Activated T-helper 1 cell treated with anti-CD3 and anti-CD28 coated beads, Interleukin-12 subunit alpha, Interleukin-12 subunit beta, Interleukin-2, Interleukin-4 antibody, amounts not matched to agents 30 ng/mL and 10 ng/mL and 1 ng/mL, durations not matched to agents 14 hours and 24 hours and 36 hours (primary cell): ENCODE measurements at regions of chr4 and their contacts with region 1.

Region 1: DNA sequence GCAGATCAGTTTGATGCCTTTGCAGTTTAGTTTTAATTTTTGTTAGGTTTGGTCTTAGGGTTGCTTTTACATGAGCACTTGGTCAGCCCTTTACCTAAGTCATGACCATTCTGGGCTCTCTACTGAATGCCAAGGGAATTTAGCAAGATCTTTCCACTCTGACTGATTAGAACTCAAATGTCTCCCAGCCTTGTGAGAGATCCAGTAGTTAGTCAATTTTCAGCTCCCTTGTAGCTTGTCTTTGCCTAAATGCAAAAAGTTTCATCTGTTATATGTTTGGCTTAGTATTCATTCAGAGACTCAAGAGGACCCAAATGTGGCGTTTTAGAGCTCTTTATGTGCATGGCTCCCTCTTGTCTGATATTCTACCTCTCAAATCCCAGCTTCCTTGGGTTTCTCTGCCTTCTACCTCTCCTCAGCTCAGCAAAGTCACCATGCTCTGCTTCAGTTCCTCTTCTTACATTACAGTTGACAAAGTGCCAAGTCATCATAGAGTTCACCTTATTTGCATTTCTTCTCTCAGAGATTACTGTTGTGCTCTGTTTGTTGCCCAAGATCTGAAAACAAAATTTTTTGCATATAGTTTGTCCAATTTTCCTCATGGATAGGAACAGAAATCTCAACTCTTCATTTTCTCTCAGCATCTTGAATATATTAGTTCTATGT is 17.5 kb upstream of the JAKMIP1 start:
- DNase-seq: no peak
- H3K4me3 Mint-ChIP-seq: no peak overlapping the region
- H3K27ac Mint-ChIP-seq: no peak overlapping the region
- H3K4me1 Mint-ChIP-seq: no peaks in the 10 kb centered on the region
- H3K27me3 Mint-ChIP-seq: peaks cover 51% of the 10 kb centered on the region

Region 2: GRCh38 chr4:5635826-5636195 is 582.0 kb before region 1 on chr4:
- intact Hi-C with region 1: loop called (anchors 10 kb)
- DNase-seq: no peak
- H3K4me3 Mint-ChIP-seq: no peak overlapping the region
- H3K27ac Mint-ChIP-seq: no peak overlapping the region
- H3K4me1 Mint-ChIP-seq: no peaks in the 10 kb centered on the region
- H3K27me3 Mint-ChIP-seq: no peaks in the 10 kb centered on the region

Region 3: DNA sequence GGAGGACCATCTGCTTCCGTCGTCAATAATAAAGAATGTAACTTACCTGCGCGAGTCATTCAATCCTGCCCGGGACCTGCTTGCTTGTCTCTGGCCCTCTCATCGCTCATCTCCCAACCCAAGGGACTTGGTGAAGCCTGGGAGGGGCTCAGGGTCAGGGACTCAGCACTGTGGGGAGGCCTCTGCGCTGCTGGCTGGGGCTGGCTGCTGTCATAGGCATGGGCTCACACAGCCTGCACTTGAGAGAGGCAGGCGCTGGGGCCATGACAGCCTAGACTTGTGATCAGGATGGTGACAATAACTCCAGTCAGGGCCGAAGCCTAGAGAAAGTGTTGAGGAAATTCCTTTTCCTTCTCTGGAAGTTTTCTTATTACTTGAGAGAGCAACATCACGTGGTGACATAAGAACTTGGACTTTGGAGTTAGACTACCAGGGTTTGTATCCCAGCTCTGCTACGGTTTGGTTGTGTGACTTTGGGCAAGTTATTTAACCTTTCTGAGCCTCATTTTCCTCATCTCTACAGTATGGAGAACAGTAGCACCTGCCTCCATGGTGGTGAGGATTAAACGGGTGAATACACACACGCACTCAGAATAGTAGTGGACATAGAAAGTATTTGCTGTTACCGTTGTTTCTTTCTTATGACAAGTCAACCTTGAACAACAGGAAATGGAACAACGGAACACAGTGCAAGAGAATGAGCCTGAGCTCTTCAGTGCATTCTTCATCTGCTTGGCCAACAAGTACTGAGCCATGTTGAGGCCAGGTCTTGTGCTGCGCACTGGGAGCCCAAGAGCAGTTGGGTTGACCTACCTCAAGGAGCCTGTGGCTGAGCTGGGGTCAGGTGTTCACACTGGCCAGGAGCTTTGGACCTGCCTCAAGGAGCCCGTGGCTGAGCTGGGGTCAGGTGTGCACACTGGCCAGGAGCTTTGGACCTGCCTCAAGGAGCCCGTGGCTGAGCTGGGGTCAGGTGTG is 752.3 kb after region 1 on chr4:
- intact Hi-C with region 1: no loop called
- DNase-seq: no peak
- H3K4me3 Mint-ChIP-seq: no peak overlapping the region
- H3K27ac Mint-ChIP-seq: no peak overlapping the region
- H3K4me1 Mint-ChIP-seq: peaks cover 19% of the 10 kb centered on the region
- H3K27me3 Mint-ChIP-seq: no peaks in the 10 kb centered on the region